CD14-positive monocyte (primary cell): ENCODE measurements at regions of chr9 and their contacts with region 1.

Region 1: GRCh38 chr9:105244003-105244733 is at the start of gene SLC44A1:
- DNase-seq: peak; percentile 91 to 95 (median 91)
- H3K4me3 ChIP-seq: peak within 1 kb of the TSS; percentile 82 to 93 (median 92)
- H3K4me3 Mint-ChIP-seq: peak within 1 kb of the TSS; percentile 95 to 98
- H3K27ac ChIP-seq: peak within 1 kb of the TSS; percentile 83 to 92
- H3K27ac Mint-ChIP-seq: peak within 1 kb of the TSS; percentile 89 to 97 (median 93)
- H3K4me1 ChIP-seq: peaks cover 15 to 25% of the 10 kb centered on the region in 2 donors
- H3K4me1 Mint-ChIP-seq: peaks cover 51% of the 10 kb centered on the region
- H3K27me3 ChIP-seq: no peaks in the 10 kb centered on the region
- H3K27me3 Mint-ChIP-seq: peaks cover 0 to 8% (median 3%) of the 10 kb centered on the region in 3 donors
- CTCF ChIP-seq: no peak
- polyA plus RNA-seq, gene SLC44A1: 6.9 to 52.1 (median 46.5) TPM

Region 2: GRCh38 chr9:105158898-105159297 is 85.3 kb before region 1 on chr9:
- intact Hi-C with region 1: no loop called
- DNase-seq: no peak
- H3K4me3 ChIP-seq: no peak overlapping the region
- H3K4me3 Mint-ChIP-seq: no peak overlapping the region
- H3K27ac ChIP-seq: no peak overlapping the region
- H3K27ac Mint-ChIP-seq: no peak overlapping the region
- H3K4me1 ChIP-seq: peaks cover 18 to 29% of the 10 kb centered on the region in 2 donors
- H3K4me1 Mint-ChIP-seq: peaks cover 21% of the 10 kb centered on the region
- H3K27me3 ChIP-seq: no peaks in the 10 kb centered on the region
- H3K27me3 Mint-ChIP-seq: peaks cover 0 to 2% (median 2%) of the 10 kb centered on the region in 3 donors
- CTCF ChIP-seq: no peak

Region 3: GRCh38 chr9:105191508-105192121 is 52.6 kb before region 1 on chr9:
- intact Hi-C with region 1: loop called (anchors 2 to 10 kb)
- DNase-seq: peak; percentile 85 to 94 (median 94)
- H3K4me3 ChIP-seq: peak overlapping the region in 2 of 3 experiments; percentile 8 to 60
- H3K4me3 Mint-ChIP-seq: peak overlapping the region; percentile 52 to 77
- H3K27ac ChIP-seq: peak overlapping the region; percentile 50 to 71
- H3K27ac Mint-ChIP-seq: peak overlapping the region; percentile 77 to 94 (median 93)
- H3K4me1 ChIP-seq: peaks cover 83 to 87% of the 10 kb centered on the region in 2 donors
- H3K4me1 Mint-ChIP-seq: peaks cover 86% of the 10 kb centered on the region
- H3K27me3 ChIP-seq: no peaks in the 10 kb centered on the region
- H3K27me3 Mint-ChIP-seq: peaks cover 0 to 10% (median 2%) of the 10 kb centered on the region in 3 donors
- CTCF ChIP-seq: no peak

Region 4: GRCh38 chr9:105290398-105290797 is 46.2 kb after region 1 on chr9:
- intact Hi-C with region 1: loop called in 1 of 2 experiments (anchors 5 kb)
- DNase-seq: peak; percentile 23 to 60 (median 51)
- H3K4me3 ChIP-seq: no peak overlapping the region
- H3K4me3 Mint-ChIP-seq: no peak overlapping the region
- H3K27ac ChIP-seq: peak overlapping the region in 1 of 2 donors; percentile 39
- H3K27ac Mint-ChIP-seq: peak overlapping the region in 2 of 7 donors; percentile 46 to 63
- H3K4me1 ChIP-seq: peaks cover 22 to 25% of the 10 kb centered on the region in 2 donors
- H3K4me1 Mint-ChIP-seq: peaks cover 50% of the 10 kb centered on the region
- H3K27me3 ChIP-seq: no peaks in the 10 kb centered on the region
- H3K27me3 Mint-ChIP-seq: no peaks in the 10 kb centered on the region
- CTCF ChIP-seq: no peak